ENCODE measurements at regions of chr5 and their contacts with region 1.

Region 1: DNA sequence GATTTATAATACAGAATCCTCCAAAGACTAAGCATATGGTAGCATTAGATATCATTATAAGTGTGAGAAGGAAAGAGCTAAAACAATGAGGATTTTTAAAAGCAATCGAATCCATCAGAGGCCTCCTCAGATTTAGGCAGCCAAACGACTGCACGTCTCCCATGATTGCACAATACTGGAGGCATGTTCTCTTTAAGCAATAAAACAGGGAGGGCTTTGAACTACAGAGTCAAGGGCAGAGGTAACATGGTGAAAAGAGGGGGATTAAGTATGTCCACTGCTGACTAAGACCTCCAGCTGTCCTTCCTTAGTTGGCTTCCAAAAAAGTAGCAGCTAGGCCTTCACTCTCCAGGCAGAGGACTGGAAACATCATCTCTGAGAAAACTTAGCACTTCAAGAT is 298.7 kb upstream of the RGMB start:
- DNase-seq: no peak
- ATAC-seq: peak; percentile 51

Region 2: GRCh38 chr5:98768160-98769005 is 293.6 kb after region 1 on chr5:
- intact Hi-C with region 1: loop called in 1 of 2 experiments (anchors 10 kb)
- DNase-seq: peak in 1 of 2 donors; percentile 58
- ATAC-seq: peak; percentile 24

Measured in left colon (tissue), 2 donors.